PC-3 (cell line): ENCODE measurements at regions of chr11 and their contacts with region 1.

Region 1: GRCh38 chr11:34680918-34681554 is 60.1 kb downstream of the EHF start:
- DNase-seq: peak; percentile 97
- ATAC-seq: peak; percentile 87
- H3K4me3 ChIP-seq: no peak overlapping the region
- H3K27ac ChIP-seq: peak overlapping the region; percentile 91
- H3K4me1 ChIP-seq: peaks cover 52% of the 10 kb centered on the region
- H3K27me3 ChIP-seq: no peaks in the 10 kb centered on the region
- CTCF ChIP-seq: no peak

Region 2: GRCh38 chr11:34640050-34640923 is 40.7 kb before region 1 on chr11:
- CTCF ChIA-PET with region 1: no interaction called
- POLR2A ChIA-PET with region 1: interaction called, 3 read pairs
- intact Hi-C with region 1: loop called (anchors 2 kb)
- DNase-seq: peak; percentile 95
- ATAC-seq: peak; percentile 85
- H3K4me3 ChIP-seq: peak overlapping the region; percentile 20; the same call in 1 of the 2 replicates
- H3K27ac ChIP-seq: peak overlapping the region; percentile 97
- H3K4me1 ChIP-seq: peaks cover 70% of the 10 kb centered on the region
- H3K27me3 ChIP-seq: no peaks in the 10 kb centered on the region
- CTCF ChIP-seq: no peak

Region 3: DNA sequence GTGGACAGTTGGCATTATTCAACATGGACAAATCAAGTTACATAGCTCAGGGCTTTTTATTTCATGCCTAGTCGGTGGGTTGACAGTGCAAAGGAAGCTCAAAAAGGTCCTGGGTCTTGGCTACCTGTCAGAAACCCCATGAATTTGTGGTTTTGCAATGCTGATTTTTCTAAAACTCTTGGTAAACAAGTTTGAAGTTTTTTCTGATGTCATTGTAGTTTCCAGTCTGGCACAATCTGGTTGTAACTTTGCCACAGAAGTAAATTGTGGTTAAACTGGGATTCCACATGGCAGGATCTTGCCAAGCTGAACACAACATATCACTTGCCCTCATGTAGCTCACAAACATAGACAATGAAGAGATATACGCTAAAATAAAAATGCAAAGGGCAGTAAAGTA is 40.6 kb after region 1 on chr11:
- CTCF ChIA-PET with region 1: no interaction called
- POLR2A ChIA-PET with region 1: no interaction called
- intact Hi-C with region 1: loop called (anchors 1 kb)
- DNase-seq: peak; percentile 2
- ATAC-seq: no peak
- H3K4me3 ChIP-seq: no peak overlapping the region
- H3K27ac ChIP-seq: no peak overlapping the region
- H3K4me1 ChIP-seq: peaks cover 4% of the 10 kb centered on the region; the same call in 1 of the 2 replicates
- H3K27me3 ChIP-seq: no peaks in the 10 kb centered on the region
- CTCF ChIP-seq: no peak